ENCODE measurements at regions of chr1 and their contacts with region 1.

Region 1: GRCh38 chr1:162056043-162056442 is 13.4 kb upstream of the NOS1AP start:
- DNase-seq: peak; percentile 85
- H3K4me3 Mint-ChIP-seq: no peak overlapping the region
- H3K27ac Mint-ChIP-seq: no peak overlapping the region
- H3K4me1 Mint-ChIP-seq: peaks cover 14% of the 10 kb centered on the region
- H3K27me3 Mint-ChIP-seq: no peaks in the 10 kb centered on the region
- CTCF ChIP-seq: peak; percentile 99

Region 2: GRCh38 chr1:161986328-161986727 is 69.7 kb before region 1 on chr1:
- CTCF ChIA-PET with region 1: no interaction called
- POLR2A ChIA-PET with region 1: no interaction called
- intact Hi-C with region 1: no loop called
- DNase-seq: no peak
- H3K4me3 Mint-ChIP-seq: no peak overlapping the region
- H3K27ac Mint-ChIP-seq: no peak overlapping the region
- H3K4me1 Mint-ChIP-seq: no peaks in the 10 kb centered on the region
- H3K27me3 Mint-ChIP-seq: peaks cover 38% of the 10 kb centered on the region
- CTCF ChIP-seq: no peak

Region 3: DNA sequence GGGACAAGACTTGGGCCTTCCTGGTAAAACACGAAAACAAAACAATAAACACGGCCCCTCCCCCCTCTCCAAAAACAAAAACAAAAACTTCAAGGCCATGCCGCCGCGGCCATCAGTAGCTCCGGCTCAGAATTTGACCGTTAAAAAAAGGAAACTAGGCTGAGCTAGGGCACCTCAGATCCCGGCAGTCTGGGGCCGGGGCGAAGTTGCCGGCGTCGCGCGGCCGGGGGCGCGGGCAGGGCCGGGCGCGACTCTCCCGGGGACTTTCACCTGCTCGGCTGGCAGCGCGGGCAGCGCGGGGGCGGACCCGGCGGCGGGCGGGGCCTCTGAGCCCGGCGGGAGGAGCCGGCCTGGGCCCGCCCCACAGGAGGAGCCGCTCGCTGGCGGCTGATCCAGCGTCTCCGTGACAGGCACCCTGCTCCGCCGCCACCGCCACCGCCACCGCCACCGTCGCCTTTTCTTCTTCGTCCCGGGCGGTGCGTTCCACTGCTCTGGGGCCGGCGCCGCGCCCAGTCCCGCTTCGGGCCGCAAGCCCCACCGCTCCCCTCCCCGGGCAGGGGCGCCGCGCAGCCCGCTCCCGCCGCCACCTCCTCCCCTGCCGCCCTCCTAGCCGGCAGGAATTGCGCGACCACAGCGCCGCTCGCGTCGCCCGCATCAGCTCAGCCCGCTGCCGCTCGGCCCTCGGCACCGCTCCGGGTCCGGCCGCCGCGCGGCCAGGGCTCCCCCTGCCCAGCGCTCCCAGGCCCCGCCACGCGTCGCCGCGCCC is 13.5 kb after region 1 on chr1 and contains the start of gene NOS1AP:
- CTCF ChIA-PET with region 1: interaction called, 17 read pairs
- POLR2A ChIA-PET with region 1: interaction called, 3 read pairs
- intact Hi-C with region 1: no loop called
- DNase-seq: peak; percentile 82
- H3K4me3 Mint-ChIP-seq: peak within 1 kb of the TSS; percentile 84
- H3K27ac Mint-ChIP-seq: no peak within 1 kb of the TSS
- H3K4me1 Mint-ChIP-seq: peaks cover 12% of the 10 kb centered on the region
- H3K27me3 Mint-ChIP-seq: no peaks in the 10 kb centered on the region
- CTCF ChIP-seq: no peak
- total RNA-seq, gene NOS1AP: 1.1 and 2.4 TPM in 2 replicates

Region 4: GRCh38 chr1:162256287-162256686 is 200.2 kb after region 1 on chr1:
- CTCF ChIA-PET with region 1: interaction called, 12 read pairs
- POLR2A ChIA-PET with region 1: no interaction called
- intact Hi-C with region 1: no loop called
- DNase-seq: no peak
- H3K4me3 Mint-ChIP-seq: no peak overlapping the region
- H3K27ac Mint-ChIP-seq: no peak overlapping the region
- H3K4me1 Mint-ChIP-seq: no peaks in the 10 kb centered on the region
- H3K27me3 Mint-ChIP-seq: peaks cover 2% of the 10 kb centered on the region
- CTCF ChIP-seq: no peak

Region 5: DNA sequence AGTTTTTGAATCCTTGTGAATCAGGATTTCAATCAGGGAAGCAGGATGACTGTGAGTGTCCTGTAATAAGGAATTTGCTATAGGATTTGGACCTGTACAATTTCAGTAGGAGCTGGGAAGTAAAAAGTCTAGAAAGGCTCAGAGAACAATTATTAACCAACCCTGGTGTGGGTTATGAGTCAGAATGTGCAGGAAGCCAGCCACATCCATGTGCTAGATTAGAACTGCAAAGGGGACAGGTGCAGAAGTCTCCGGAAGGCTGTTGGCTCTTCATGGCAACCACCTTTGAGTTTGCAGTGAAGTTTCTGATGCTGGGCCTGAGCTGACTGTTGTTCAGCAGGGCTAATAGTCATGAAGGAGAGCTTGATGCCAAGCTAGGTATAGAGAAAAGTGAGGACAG is 249.9 kb after region 1 on chr1:
- CTCF ChIA-PET with region 1: interaction called, 13 read pairs
- POLR2A ChIA-PET with region 1: no interaction called
- intact Hi-C with region 1: no loop called
- DNase-seq: peak; percentile 65
- H3K4me3 Mint-ChIP-seq: no peak overlapping the region
- H3K27ac Mint-ChIP-seq: no peak overlapping the region
- H3K4me1 Mint-ChIP-seq: peaks cover 40% of the 10 kb centered on the region
- H3K27me3 Mint-ChIP-seq: no peaks in the 10 kb centered on the region
- CTCF ChIP-seq: no peak

Region 6: DNA sequence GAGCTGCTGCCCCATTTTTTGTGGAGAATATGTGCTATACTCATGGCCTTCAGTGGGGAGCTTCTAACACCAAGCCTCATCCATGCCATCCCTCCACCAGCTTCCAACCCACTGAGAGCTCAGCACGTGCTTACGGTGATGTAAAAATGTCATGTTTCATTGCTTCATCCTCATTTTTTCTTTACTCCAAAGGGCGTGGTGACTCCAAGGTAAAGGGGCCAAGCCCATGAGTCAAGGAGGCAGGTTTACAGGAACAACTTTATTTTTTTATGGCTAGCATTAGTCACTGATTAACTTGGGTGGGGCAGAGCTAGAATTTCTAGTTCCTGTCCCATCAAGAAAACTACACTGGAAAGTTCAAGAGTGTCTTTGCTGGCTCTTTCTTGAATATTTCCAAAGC is 325.3 kb after region 1 on chr1 and contains the start of gene C1orf226:
- CTCF ChIA-PET with region 1: interaction called, 25 read pairs
- POLR2A ChIA-PET with region 1: no interaction called
- intact Hi-C with region 1: no loop called
- DNase-seq: peak; percentile 95
- H3K4me3 Mint-ChIP-seq: peak within 1 kb of the TSS; percentile 26
- H3K27ac Mint-ChIP-seq: peak within 1 kb of the TSS; percentile 89
- H3K4me1 Mint-ChIP-seq: peaks cover 50% of the 10 kb centered on the region
- H3K27me3 Mint-ChIP-seq: no peaks in the 10 kb centered on the region
- CTCF ChIP-seq: no peak
- total RNA-seq, gene C1orf226: 3.1 and 3.3 TPM in 2 replicates

Region 7: DNA sequence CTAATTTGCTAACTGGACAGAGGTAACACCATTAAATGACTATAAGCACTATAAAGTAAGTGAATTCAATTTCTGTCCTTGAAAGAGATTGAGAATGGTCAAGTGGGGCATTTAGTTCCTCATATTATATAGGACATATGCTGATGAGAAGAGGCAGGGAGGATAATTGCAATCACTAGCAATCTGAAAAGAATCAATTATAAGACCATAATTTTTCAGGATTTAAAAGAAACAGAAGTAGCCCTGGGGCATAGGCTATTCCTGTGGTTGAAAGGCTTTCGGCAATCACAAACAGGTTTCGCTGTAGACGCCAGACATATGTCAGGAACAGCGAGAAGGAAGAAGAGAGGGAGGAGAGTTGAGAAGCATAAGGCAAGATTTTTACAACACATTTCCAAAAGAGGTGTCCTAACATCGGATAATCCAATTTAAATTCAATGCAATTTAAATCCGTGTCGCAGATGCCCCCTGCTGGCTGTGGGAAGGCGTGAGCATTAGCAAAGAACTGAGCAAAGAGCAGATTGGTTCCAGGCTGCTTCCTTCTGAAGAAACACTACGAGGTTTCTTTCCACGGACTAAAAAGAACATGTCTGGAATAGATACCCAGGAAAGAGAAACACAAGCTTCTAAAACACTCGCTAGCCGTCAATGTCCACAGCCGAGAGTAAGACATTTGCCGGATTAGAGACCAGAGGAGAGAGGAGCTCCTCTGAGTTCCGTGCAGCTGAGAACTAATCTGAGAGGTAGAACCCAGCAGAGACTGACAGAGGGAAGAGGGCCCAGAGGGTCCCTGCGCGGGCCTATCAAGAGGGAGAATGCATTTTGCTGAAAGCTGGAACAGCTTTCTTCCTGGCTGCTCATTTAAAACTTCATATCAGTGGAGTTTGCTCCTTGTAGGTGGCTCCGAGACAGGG is 1118.7 kb after region 1 on chr1:
- CTCF ChIA-PET with region 1: no interaction called
- POLR2A ChIA-PET with region 1: no interaction called
- intact Hi-C with region 1: loop called (anchors 5 kb)
- DNase-seq: peak; percentile 73
- H3K4me3 Mint-ChIP-seq: peak overlapping the region; percentile 0
- H3K27ac Mint-ChIP-seq: no peak overlapping the region
- H3K4me1 Mint-ChIP-seq: peaks cover 19% of the 10 kb centered on the region
- H3K27me3 Mint-ChIP-seq: no peaks in the 10 kb centered on the region
- CTCF ChIP-seq: peak; percentile 95

Measured in MCF 10A (cell line).